Activated T-helper 1 cell treated with anti-CD3 and anti-CD28 coated beads, Interleukin-12 subunit alpha, Interleukin-12 subunit beta, Interleukin-2, Interleukin-4 antibody, amounts not matched to agents 30 ng/mL and 10 ng/mL and 1 ng/mL, durations not matched to agents 14 hours and 24 hours and 36 hours (primary cell): ENCODE measurements at regions of chr3 and their contacts with region 1.

Region 1: GRCh38 chr3:123559040-123559861 is 25.6 kb downstream of the HACD2 start:
- DNase-seq: no peak
- H3K4me3 Mint-ChIP-seq: no peak overlapping the region
- H3K27ac Mint-ChIP-seq: no peak overlapping the region
- H3K4me1 Mint-ChIP-seq: peaks cover 6% of the 10 kb centered on the region
- H3K27me3 Mint-ChIP-seq: no peaks in the 10 kb centered on the region

Region 2: DNA sequence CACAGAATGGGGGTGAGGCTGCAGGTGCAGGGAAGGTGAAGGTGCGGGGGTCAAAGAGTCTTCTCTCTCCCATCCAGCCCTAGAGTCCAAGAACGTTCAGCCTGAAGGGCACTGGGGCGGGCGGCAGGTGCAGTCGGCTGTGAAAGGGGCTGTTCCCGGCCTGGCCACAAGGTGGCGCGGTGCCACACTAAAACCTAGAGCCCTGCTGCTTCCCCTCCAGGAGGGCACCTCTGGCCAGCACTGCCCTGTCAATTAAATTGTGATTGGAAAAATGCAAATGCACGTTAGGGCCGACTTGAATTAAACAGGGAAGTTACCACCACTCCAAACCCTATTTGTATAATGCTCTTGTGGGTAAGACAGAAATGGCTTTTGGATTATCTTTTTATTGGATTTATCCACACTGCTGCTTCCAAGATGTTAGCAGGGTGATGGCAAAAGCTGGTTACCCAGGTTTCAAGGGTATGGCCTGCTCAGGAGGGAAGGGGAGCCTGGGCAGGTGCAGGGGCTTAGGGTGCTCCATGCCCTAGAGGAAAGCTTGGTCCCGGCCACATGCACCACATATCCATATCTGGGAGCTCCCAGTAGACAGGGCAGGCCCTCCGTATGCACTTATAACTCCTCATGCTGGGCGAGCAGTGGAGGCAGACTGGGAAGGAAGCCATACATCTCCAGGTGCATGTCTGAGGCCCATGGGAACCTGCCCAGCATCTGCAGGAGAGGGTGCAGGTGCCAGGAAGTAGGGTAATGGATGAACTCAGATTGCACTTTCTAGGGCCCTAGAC is 230.2 kb before region 1 on chr3:
- intact Hi-C with region 1: loop called (anchors 1 kb)
- DNase-seq: peak; percentile 50
- H3K4me3 Mint-ChIP-seq: no peak overlapping the region
- H3K27ac Mint-ChIP-seq: no peak overlapping the region
- H3K4me1 Mint-ChIP-seq: no peaks in the 10 kb centered on the region
- H3K27me3 Mint-ChIP-seq: peaks cover 2% of the 10 kb centered on the region

Region 3: DNA sequence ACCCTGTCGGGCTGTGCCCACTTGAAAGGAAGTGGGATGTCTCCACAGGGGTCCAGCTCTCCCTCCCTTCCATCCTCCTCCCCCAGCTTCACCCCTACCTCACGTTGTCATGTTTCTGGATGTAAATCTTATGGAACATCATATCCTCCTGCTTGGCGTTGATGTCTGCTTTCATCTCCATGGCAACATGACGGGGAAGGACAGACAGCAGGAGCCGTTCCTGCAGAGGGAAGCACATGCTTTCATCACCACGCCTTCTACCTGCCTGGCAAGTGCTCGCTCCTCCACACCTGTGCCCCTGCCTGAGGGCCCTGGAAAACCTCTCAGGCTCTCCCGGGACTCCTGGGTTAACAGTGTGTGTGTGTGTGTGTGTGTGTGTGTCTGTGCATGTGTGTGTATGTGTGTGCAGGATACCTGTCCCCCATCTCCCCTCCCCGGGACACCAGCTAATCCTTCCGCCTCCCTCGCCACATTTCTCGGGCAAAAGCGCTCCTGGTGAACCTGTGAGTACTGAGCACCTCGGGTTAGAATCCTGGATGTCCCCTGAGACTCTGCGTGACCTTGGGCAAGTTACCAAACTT is 211.5 kb before region 1 on chr3:
- intact Hi-C with region 1: no loop called
- DNase-seq: no peak
- H3K4me3 Mint-ChIP-seq: no peak overlapping the region
- H3K27ac Mint-ChIP-seq: no peak overlapping the region
- H3K4me1 Mint-ChIP-seq: peaks cover 18% of the 10 kb centered on the region
- H3K27me3 Mint-ChIP-seq: peaks cover 7% of the 10 kb centered on the region

Region 4: DNA sequence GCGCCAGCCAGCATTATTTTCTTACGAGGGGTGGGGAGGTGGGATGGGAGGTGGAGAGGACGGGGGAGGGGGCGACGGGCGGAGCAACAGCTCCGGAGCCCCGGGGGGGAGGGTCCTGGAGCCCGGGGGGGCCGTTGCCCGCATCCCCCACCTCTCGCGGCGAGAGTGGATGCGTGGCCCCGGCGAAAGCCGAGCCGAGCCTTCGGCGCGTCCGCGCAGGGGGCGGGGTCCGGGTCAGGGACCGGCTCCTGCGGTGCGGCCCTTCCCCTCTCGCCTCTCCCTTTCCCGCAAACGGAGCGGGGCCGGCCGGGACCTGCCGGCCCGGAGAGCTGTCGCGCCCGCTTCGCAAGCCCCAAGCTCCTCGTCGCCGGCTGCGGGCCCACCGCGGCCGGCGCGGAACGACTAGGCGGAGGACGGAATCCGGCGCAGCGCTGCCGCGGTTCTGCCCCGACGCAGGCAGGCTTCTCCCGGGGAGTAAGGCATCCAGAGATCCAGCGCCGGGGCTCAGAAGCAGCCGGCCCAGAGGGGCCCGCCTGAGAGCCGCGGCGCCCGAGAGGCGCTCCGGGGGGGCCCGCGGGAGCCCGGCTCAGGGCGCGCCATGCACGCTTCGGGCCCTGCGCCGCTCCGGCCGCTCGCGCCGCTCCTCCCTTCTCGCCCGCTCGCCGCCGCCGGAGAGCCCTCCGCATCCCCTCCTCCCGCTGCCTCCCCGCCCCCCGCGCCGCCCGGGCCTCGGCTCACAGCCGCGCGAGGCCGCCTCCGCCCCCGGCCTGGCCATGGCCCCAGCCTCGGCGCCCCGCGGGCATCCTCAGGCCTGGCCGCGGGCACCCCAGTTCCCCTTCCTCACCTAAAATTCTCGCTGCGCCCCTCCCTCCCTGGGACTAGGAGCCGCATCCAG is 109.9 kb before region 1 on chr3:
- intact Hi-C with region 1: loop called (anchors 2 kb)
- DNase-seq: no peak
- H3K4me3 Mint-ChIP-seq: no peak overlapping the region
- H3K27ac Mint-ChIP-seq: no peak overlapping the region
- H3K4me1 Mint-ChIP-seq: peaks cover 4% of the 10 kb centered on the region
- H3K27me3 Mint-ChIP-seq: peaks cover 60% of the 10 kb centered on the region

Region 5: GRCh38 chr3:123489400-123490004 is 69.7 kb before region 1 on chr3:
- intact Hi-C with region 1: loop called (anchors 1 kb)
- DNase-seq: peak; percentile 15
- H3K4me3 Mint-ChIP-seq: no peak overlapping the region
- H3K27ac Mint-ChIP-seq: no peak overlapping the region
- H3K4me1 Mint-ChIP-seq: no peaks in the 10 kb centered on the region
- H3K27me3 Mint-ChIP-seq: peaks cover 2% of the 10 kb centered on the region

Region 6: DNA sequence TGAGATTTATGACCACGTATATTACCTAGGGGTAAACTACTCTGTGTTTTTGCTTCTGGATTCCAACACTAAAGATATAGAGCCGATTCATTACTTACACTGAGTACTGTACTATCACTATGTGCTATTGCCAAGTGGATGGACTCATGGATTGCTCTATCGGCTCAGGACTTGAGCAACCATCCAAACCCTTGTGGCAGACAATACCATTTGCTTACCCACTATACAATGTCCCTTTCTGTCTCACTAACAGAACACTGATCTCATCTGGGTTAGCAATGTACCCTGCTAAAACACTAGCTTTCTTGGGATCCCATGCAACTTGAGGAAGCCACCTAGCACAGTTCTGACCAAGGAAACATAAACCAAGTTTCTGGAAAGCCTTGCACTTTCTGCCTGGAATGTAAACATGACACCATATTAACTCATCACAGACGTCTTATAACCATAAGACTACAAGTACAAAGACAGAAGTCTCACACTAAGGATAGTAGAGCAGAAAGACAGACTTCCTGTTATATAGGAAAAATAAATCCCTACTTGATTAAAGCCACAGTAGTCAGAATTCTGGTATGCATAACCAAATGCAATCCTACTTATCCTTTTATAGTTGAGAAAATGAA is 13.0 kb before region 1 on chr3:
- intact Hi-C with region 1: no loop called
- DNase-seq: no peak
- H3K4me3 Mint-ChIP-seq: no peak overlapping the region
- H3K27ac Mint-ChIP-seq: no peak overlapping the region
- H3K4me1 Mint-ChIP-seq: no peaks in the 10 kb centered on the region
- H3K27me3 Mint-ChIP-seq: no peaks in the 10 kb centered on the region

Region 7: GRCh38 chr3:123605789-123606234 is 46.6 kb after region 1 on chr3:
- intact Hi-C with region 1: no loop called
- DNase-seq: no peak
- H3K4me3 Mint-ChIP-seq: no peak overlapping the region
- H3K27ac Mint-ChIP-seq: no peak overlapping the region
- H3K4me1 Mint-ChIP-seq: no peaks in the 10 kb centered on the region
- H3K27me3 Mint-ChIP-seq: no peaks in the 10 kb centered on the region